Natural killer cell (primary cell): ENCODE measurements at regions of chr1 and their contacts with region 1.

Region 1: GRCh38 chr1:112501810-112502641 is 6.7 kb upstream of the WNT2B start:
- DNase-seq: peak; percentile 47 to 72
- ATAC-seq: peak; percentile 57 to 85 (median 76)
- H3K4me3 ChIP-seq: peak overlapping the region; percentile 12
- H3K4me3 Mint-ChIP-seq: peak overlapping the region; percentile 65
- H3K27ac ChIP-seq: no peak overlapping the region
- H3K27ac Mint-ChIP-seq: no peak overlapping the region
- H3K4me1 ChIP-seq: peaks cover 8% of the 10 kb centered on the region
- H3K4me1 Mint-ChIP-seq: no peaks in the 10 kb centered on the region
- H3K27me3 ChIP-seq: peaks cover 29% of the 10 kb centered on the region
- H3K27me3 Mint-ChIP-seq: peaks cover 56 to 61% of the 10 kb centered on the region in 2 donors
- CTCF ChIP-seq: peak; percentile 53

Region 2: GRCh38 chr1:112614460-112615065 is 112.5 kb after region 1 on chr1:
- intact Hi-C with region 1: loop called (anchors 1 kb)
- DNase-seq: peak in 1 of 2 donors; percentile 60
- ATAC-seq: no peak
- H3K4me3 ChIP-seq: no peak overlapping the region
- H3K4me3 Mint-ChIP-seq: no peak overlapping the region
- H3K27ac ChIP-seq: no peak overlapping the region
- H3K27ac Mint-ChIP-seq: no peak overlapping the region
- H3K4me1 ChIP-seq: peaks cover 4% of the 10 kb centered on the region
- H3K4me1 Mint-ChIP-seq: peaks cover 15 to 22% of the 10 kb centered on the region in 2 donors
- H3K27me3 ChIP-seq: no peaks in the 10 kb centered on the region
- H3K27me3 Mint-ChIP-seq: no peaks in the 10 kb centered on the region
- CTCF ChIP-seq: peak; percentile 52